Transverse colon (tissue), 4 donors: ENCODE measurements at regions of chr11 and their contacts with region 1.

Region 1: DNA sequence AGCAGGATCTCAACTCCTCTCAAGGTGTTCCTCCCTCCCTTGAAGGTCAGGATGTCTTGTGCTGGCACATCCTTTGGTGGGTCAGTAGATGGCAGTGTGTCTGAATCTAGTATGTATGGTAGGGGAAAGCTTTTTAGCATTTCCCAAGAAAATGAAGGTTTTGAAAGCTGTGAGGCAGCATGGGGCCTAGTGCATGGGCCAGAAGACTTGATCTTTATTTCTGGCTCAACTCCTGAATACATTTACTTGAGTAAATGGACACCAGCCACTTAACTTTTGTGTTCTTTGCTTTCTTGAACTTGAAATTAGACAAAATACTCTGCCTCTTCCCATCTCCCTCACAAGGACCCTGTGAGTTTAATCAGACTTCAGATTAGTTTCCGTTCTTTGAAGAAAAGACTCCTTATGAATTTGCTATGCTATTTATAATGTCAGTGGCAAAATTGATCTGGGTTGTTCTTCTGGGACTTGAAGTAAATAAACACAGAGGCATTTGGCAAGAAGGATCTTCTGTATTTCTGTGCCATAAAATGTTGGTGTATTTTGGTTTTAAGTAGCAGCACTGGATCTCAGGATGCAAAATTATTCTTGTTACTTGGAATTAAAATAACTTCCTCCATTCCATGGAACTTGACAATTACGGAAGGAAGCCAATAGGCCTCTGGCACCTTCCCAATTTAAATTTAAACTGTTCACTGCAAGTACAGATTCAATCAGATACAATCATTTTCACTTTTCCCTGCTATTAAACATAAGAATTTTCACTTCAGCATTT is 288.8 kb downstream of the CASP12 start:
- DNase-seq: peak; percentile 9
- H3K4me3 ChIP-seq: no peak overlapping the region
- H3K27ac ChIP-seq: peak overlapping the region in 1 of 4 donors; percentile 0
- H3K4me1 ChIP-seq: peaks cover 0 to 3% (median 0%) of the 10 kb centered on the region in 4 donors
- H3K27me3 ChIP-seq: no peaks in the 10 kb centered on the region
- CTCF ChIP-seq: peak in 4 of 5 experiments; percentile 45 to 53 (median 48)
- EP300 ChIP-seq: no peak
- POLR2A ChIP-seq: no peak

Region 2: DNA sequence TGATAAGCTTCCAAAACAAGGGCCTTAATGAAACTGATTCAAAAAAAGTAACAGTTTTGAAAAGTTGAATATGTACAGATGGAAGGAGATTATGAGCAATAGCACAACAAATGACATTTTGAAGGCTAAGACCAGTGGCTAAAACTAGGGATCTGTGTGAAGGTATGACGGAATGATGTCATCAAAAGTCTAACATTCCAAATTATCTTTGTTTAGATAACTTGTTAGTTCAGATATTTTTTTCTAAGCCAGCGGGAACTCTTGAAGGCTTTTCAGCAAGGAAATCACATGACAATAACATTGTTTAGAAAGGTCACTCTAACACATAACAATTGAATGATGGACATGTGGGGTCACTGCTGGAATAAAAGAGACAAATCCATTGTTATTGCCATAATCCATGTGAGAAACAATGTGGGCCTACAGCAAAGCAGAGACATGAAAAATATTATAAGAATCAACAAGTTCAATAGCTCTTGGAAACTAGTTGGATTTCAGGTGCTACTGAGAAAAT is 28.2 kb after region 1 on chr11:
- in situ Hi-C with region 1: no loop called
- intact Hi-C with region 1: no loop called
- DNase-seq: no peak
- H3K4me3 ChIP-seq: no peak overlapping the region
- H3K27ac ChIP-seq: no peak overlapping the region
- H3K4me1 ChIP-seq: no peaks in the 10 kb centered on the region
- H3K27me3 ChIP-seq: no peaks in the 10 kb centered on the region
- CTCF ChIP-seq: no peak
- EP300 ChIP-seq: no peak
- POLR2A ChIP-seq: no peak

Region 3: DNA sequence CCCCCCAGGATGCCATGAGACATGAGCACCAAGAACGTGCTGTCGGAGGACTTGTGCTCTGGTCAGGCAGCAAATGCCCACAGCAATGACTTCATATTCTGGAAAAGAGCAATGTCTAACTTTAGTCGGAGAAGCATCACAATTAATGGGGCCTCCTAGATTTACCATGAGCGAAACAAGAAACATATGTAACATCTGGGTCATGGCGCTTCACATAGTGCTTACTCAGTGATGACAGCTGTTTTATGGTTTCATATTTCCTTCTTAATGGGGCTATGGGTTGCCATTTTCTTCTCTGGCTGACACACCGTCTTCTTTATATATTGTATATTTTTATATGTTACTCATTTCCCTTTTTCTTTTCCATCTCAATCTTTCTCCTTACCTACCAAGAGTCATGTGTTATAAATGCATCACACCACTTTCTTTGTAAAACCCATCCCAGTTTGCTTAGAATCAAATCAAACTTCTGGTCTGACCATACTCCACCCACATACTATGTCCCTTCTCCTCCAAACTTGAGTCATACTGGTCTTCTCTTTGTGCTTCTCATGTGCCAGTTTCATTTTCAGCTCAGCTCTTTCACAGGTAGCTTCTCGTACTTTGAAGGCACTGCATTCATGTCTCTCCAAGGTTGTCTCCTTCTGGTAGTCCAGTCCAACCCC is 298.2 kb after region 1 on chr11:
- in situ Hi-C with region 1: no loop called
- intact Hi-C with region 1: no loop called
- DNase-seq: no peak
- H3K4me3 ChIP-seq: no peak overlapping the region
- H3K27ac ChIP-seq: no peak overlapping the region
- H3K4me1 ChIP-seq: no peaks in the 10 kb centered on the region
- H3K27me3 ChIP-seq: no peaks in the 10 kb centered on the region
- CTCF ChIP-seq: no peak
- EP300 ChIP-seq: no peak
- POLR2A ChIP-seq: no peak

Region 4: GRCh38 chr11:105109855-105110687 is 500.6 kb after region 1 on chr11:
- in situ Hi-C with region 1: no loop called
- intact Hi-C with region 1: no loop called
- DNase-seq: peak; percentile 12
- H3K4me3 ChIP-seq: peak overlapping the region in 1 of 4 donors; percentile 21
- H3K27ac ChIP-seq: peak overlapping the region; percentile 41 to 51 (median 49)
- H3K4me1 ChIP-seq: peaks cover 0 to 12% (median 2%) of the 10 kb centered on the region in 4 donors
- H3K27me3 ChIP-seq: no peaks in the 10 kb centered on the region
- CTCF ChIP-seq: no peak
- EP300 ChIP-seq: no peak
- POLR2A ChIP-seq: no peak

Region 5: DNA sequence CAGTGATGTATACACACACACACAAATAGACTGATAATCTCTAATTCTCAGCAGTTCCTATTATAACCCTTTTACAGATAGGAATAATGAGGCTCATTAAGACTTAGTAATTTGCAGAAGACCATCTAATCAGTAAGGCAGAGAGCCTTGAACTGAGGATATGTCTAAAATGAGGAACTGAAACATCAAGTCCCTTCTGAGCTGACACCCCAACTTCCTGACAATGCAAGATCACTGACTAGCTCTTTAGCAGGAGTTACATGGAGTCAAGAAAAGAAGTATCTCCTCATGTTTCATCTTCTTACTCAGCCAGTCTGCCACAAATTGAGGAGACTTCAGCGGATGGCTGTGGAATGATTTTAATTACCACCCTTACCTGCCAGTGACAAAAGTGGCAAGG is 1219.6 kb after region 1 on chr11:
- in situ Hi-C with region 1: loop called in 1 of 4 experiments (anchors 25 kb)
- intact Hi-C with region 1: no loop called
- DNase-seq: no peak
- H3K4me3 ChIP-seq: no peak overlapping the region
- H3K27ac ChIP-seq: no peak overlapping the region
- H3K4me1 ChIP-seq: no peaks in the 10 kb centered on the region
- H3K27me3 ChIP-seq: no peaks in the 10 kb centered on the region
- CTCF ChIP-seq: no peak
- EP300 ChIP-seq: no peak
- POLR2A ChIP-seq: no peak

Region 6: DNA sequence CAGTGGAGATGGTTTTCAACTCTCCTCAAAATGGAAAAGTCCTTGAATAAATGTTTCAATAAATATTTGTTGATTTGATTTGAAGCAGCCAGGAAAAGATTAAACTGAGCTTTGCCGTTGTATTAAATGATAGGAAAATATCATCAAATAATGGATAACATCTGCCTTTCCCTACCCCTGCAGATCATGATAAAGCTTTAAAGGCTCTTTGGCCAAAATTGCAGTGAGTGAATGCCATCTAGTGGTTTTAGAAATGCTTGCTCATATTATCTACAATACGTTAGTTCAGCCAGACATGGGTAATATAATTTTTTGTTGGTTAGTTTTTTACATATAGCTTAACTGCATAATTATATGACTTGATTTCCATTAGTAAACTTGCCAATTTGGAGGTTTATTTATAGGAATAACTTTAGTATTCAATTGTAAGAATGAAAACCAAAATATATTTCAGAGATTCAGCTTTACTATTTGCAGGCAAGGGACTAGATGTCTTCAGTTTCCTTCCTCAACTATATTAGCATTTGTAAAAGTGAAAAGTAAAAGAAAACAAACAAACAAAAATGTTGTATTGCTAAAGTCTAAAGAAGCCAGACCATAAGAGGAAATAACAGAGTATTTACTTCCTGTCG is 1253.4 kb after region 1 on chr11:
- in situ Hi-C with region 1: loop called in 1 of 4 experiments (anchors 25 kb)
- intact Hi-C with region 1: no loop called
- DNase-seq: no peak
- H3K4me3 ChIP-seq: no peak overlapping the region
- H3K27ac ChIP-seq: no peak overlapping the region
- H3K4me1 ChIP-seq: no peaks in the 10 kb centered on the region
- H3K27me3 ChIP-seq: no peaks in the 10 kb centered on the region
- CTCF ChIP-seq: peak; percentile 58 to 62 (median 60)
- EP300 ChIP-seq: no peak
- POLR2A ChIP-seq: no peak